CD8-positive, alpha-beta memory T cell (primary cell): ENCODE measurements at regions of chr3 and their contacts with region 1.

Region 1: DNA sequence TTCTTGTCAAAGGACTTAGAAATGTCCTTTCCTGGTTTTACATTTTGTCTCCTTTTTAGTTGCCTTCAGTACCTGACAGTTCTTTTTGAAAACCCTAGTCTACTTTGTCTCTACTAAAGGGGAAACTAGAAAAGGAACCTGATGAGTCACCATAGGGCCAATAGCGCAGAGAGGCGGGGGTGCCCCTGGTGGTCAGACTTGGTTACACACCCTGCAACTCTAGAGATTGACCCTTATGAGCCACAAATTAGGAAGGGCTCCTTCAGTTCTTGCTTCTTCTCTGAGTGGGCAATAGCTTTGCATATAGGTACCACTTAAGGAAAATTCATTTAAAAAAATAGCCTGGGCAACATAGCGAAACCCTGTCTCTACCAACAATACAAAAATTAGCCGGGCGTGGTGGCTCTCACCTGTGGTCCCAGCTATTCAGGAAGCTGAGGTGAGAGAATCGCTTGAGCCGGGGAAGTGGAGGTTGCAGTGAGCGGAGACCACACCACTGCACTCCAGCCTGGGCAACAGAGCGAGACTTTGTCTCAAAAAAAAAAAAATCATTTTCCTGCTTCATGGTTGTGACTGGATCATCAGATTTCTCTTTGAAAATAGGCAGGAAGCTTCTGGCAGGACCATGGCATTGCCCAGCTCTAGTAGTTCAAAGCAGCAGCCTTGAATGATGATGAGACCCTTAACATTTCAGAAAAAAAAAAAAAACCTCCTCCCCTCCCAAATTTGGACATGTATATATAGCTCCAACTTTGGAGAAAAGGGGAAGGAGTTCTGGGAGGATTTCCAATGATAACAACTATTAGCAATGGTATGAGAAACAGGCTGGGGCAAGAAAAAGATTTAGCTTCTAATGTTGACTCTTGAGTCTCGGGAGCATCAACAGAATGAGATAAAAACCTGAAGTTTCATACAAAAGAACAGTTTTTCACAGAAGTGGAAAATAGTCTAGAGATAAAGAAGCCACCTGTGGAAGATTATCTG is 45.2 kb upstream of the RASA2 start:
- DNase-seq: peak; percentile 57 to 82 (median 67)
- H3K4me3 ChIP-seq: no peak overlapping the region
- H3K4me3 Mint-ChIP-seq: peak overlapping the region in 6 of 7 donors; percentile 64 to 78 (median 72)
- H3K27ac ChIP-seq: no peak overlapping the region
- H3K27ac Mint-ChIP-seq: peak overlapping the region; percentile 35 to 89 (median 82)
- H3K4me1 ChIP-seq: peaks cover 26% of the 10 kb centered on the region
- H3K4me1 Mint-ChIP-seq: peaks cover 41 to 60% (median 55%) of the 10 kb centered on the region in 3 donors
- H3K27me3 ChIP-seq: no peaks in the 10 kb centered on the region
- H3K27me3 Mint-ChIP-seq: no peaks in the 10 kb centered on the region

Region 2: GRCh38 chr3:141174674-141175073 is 267.0 kb before region 1 on chr3:
- CTCF ChIA-PET with region 1: no interaction called
- POLR2A ChIA-PET with region 1: no interaction called
- DNase-seq: no peak
- H3K4me3 ChIP-seq: no peak overlapping the region
- H3K4me3 Mint-ChIP-seq: no peak overlapping the region
- H3K27ac ChIP-seq: no peak overlapping the region
- H3K27ac Mint-ChIP-seq: no peak overlapping the region
- H3K4me1 ChIP-seq: no peaks in the 10 kb centered on the region
- H3K4me1 Mint-ChIP-seq: no peaks in the 10 kb centered on the region
- H3K27me3 ChIP-seq: peaks cover 3% of the 10 kb centered on the region
- H3K27me3 Mint-ChIP-seq: peaks cover 11 to 45% of the 10 kb centered on the region in 2 donors

Region 3: GRCh38 chr3:141311496-141312353 is 129.9 kb before region 1 on chr3:
- CTCF ChIA-PET with region 1: interaction called, 37 read pairs
- POLR2A ChIA-PET with region 1: interaction called, 3 read pairs
- DNase-seq: peak; percentile 96 to 99 (median 98)
- H3K4me3 ChIP-seq: peak overlapping the region; percentile 58
- H3K4me3 Mint-ChIP-seq: peak overlapping the region; percentile 90 to 98 (median 95)
- H3K27ac ChIP-seq: peak overlapping the region; percentile 66
- H3K27ac Mint-ChIP-seq: peak overlapping the region; percentile 82 to 99 (median 97)
- H3K4me1 ChIP-seq: peaks cover 44% of the 10 kb centered on the region
- H3K4me1 Mint-ChIP-seq: peaks cover 44 to 53% (median 48%) of the 10 kb centered on the region in 3 donors
- H3K27me3 ChIP-seq: no peaks in the 10 kb centered on the region
- H3K27me3 Mint-ChIP-seq: peaks cover 0 to 1% of the 10 kb centered on the region in 2 donors

Region 4: DNA sequence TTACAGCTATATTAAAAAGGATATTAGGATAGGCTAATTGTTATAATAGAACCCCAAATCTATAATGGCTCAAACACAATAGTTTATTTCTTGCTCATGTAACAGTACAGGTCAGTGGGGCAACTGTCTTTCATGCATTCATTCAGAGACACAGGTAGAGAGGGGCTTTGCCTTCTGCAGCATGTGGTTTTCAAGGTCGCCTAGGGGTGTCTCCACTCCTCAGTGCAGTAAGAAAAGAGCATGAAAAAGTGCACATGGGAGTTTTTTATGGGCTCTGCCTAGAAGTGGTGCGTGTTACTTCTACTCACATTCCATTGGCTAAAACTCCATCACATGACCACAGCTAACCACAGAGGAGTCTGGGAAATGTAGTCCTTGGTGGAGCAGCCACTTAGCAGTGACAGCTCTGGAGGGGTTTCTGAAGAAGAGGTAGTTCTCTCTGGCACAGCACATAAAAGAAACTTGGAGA is 71.6 kb before region 1 on chr3:
- CTCF ChIA-PET with region 1: interaction called, 62 read pairs
- POLR2A ChIA-PET with region 1: interaction called, 7 read pairs
- DNase-seq: peak; percentile 17 to 83 (median 79)
- H3K4me3 ChIP-seq: no peak overlapping the region
- H3K4me3 Mint-ChIP-seq: no peak overlapping the region
- H3K27ac ChIP-seq: peak overlapping the region; percentile 61
- H3K27ac Mint-ChIP-seq: peak overlapping the region in 3 of 8 donors; percentile 2 to 63 (median 53)
- H3K4me1 ChIP-seq: peaks cover 3% of the 10 kb centered on the region
- H3K4me1 Mint-ChIP-seq: peaks cover 7 to 11% (median 8%) of the 10 kb centered on the region in 3 donors
- H3K27me3 ChIP-seq: no peaks in the 10 kb centered on the region
- H3K27me3 Mint-ChIP-seq: peaks cover 0 to 2% of the 10 kb centered on the region in 2 donors

Region 5: DNA sequence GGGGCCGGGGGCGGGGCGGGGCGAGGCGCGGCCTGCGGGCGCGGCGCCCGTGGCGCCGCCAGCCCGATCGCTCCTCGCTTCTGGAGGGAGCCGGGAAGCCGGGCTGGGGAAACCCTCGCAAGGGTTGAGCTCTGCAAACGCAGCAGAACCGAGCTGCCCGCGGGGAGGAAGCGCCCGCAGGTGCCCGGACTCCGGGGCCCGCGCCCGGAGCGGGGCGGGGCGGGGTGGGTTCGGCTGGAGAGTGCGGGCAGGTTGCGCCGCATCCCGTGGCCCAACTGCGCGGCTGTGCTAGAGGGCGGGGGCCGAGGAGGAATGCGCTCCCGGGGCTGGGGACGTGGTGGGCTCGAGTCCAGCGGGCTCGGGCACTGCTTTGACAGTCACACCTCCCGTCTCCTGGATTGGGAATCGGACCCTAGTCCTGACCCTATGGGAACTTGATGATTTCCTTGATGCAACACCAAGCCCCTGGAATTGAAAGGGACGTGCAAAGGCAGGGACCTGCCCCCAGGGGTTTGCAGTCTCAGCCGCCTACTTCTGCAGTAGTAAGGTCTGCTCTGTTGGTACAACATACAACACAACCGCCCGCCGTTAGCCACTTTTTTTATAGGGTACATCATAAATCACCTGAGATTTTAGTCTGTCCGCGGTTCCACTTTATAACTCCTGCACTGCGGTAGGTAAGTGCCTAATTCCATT is 39.0 kb before region 1 on chr3:
- CTCF ChIA-PET with region 1: interaction called, 45 read pairs
- POLR2A ChIA-PET with region 1: interaction called, 7 read pairs
- DNase-seq: peak; percentile 21 to 70 (median 44)
- H3K4me3 ChIP-seq: peak overlapping the region; percentile 75
- H3K4me3 Mint-ChIP-seq: peak overlapping the region; percentile 93 to 99 (median 96)
- H3K27ac ChIP-seq: peak overlapping the region; percentile 55
- H3K27ac Mint-ChIP-seq: peak overlapping the region; percentile 92 to 97 (median 96)
- H3K4me1 ChIP-seq: peaks cover 61% of the 10 kb centered on the region
- H3K4me1 Mint-ChIP-seq: peaks cover 59 to 77% (median 74%) of the 10 kb centered on the region in 3 donors
- H3K27me3 ChIP-seq: no peaks in the 10 kb centered on the region
- H3K27me3 Mint-ChIP-seq: no peaks in the 10 kb centered on the region

Region 6: GRCh38 chr3:141426404-141427034 is 15.2 kb before region 1 on chr3:
- CTCF ChIA-PET with region 1: interaction called, 32 read pairs
- POLR2A ChIA-PET with region 1: no interaction called
- DNase-seq: no peak
- H3K4me3 ChIP-seq: no peak overlapping the region
- H3K4me3 Mint-ChIP-seq: no peak overlapping the region
- H3K27ac ChIP-seq: peak overlapping the region; percentile 7
- H3K27ac Mint-ChIP-seq: peak overlapping the region in 4 of 8 donors; percentile 18 to 76 (median 52)
- H3K4me1 ChIP-seq: peaks cover 19% of the 10 kb centered on the region
- H3K4me1 Mint-ChIP-seq: peaks cover 43 to 82% (median 63%) of the 10 kb centered on the region in 3 donors
- H3K27me3 ChIP-seq: no peaks in the 10 kb centered on the region
- H3K27me3 Mint-ChIP-seq: no peaks in the 10 kb centered on the region

Region 7: GRCh38 chr3:141663993-141664392 is 222.3 kb after region 1 on chr3:
- CTCF ChIA-PET with region 1: no interaction called
- POLR2A ChIA-PET with region 1: no interaction called
- DNase-seq: no peak
- H3K4me3 ChIP-seq: no peak overlapping the region
- H3K4me3 Mint-ChIP-seq: no peak overlapping the region
- H3K27ac ChIP-seq: no peak overlapping the region
- H3K27ac Mint-ChIP-seq: no peak overlapping the region
- H3K4me1 ChIP-seq: no peaks in the 10 kb centered on the region
- H3K4me1 Mint-ChIP-seq: peaks cover 0 to 11% (median 7%) of the 10 kb centered on the region in 3 donors
- H3K27me3 ChIP-seq: peaks cover 4% of the 10 kb centered on the region
- H3K27me3 Mint-ChIP-seq: peaks cover 37 to 54% of the 10 kb centered on the region in 2 donors